H1 (cell line): ENCODE measurements at regions of chr17 and their contacts with region 1.

Region 1: GRCh38 chr17:58417300-58418092 is at the start of gene RNF43:
- DNase-seq: peak; percentile 84 to 95
- H3K4me3 ChIP-seq: peak within 1 kb of the TSS; percentile 42 to 70 (median 46)
- H3K27ac ChIP-seq: peak within 1 kb of the TSS; percentile 31; the same call in 1 of the 2 replicates
- H3K4me1 ChIP-seq: no peaks in the 10 kb centered on the region; a peak in 1 of 7 replicates
- H3K27me3 ChIP-seq: no peaks in the 10 kb centered on the region
- CTCF ChIP-seq: peak; percentile 71 to 88 (median 79)
- EP300 ChIP-seq: peak in 1 of 2 experiments; percentile 83; a peak in 1 of 3 replicates
- POLR2A ChIP-seq: peak; percentile 60 to 85
- RAD21 ChIP-seq: peak; percentile 76 to 87
- total RNA-seq, gene RNF43: 0.89 and 2.4 TPM in 2 replicates

Region 2: DNA sequence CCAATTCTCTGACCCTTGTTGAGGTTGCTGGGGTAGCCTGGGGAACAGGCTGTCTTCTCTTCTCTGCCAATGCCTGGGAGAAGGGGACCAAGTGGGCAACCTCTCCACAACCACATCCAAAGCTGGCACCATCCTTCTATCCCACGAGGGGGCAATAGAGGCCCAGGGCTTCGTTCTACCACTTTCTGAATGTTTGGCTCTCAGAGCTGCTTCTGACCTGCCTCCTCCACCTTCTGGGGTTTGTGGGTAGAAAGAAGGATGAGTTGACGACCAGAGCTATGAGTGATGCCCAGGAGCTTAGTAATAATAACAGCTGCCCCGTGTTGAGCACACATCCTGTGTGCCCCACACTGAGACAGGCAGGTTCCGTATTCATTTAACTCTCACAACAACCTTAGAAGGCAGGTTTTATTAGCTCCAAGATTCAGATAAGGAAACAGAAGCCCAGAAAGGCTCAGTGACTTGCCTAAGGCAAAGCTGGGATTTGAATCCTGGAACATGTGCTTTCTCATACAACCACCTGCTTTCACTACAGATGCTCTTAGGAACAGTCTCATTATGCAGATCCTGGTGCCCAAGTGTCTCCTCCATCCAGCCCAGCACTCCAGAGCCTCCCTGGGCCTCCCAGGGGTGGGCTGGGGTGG is 100.0 kb before region 1 on chr17:
- CTCF ChIA-PET with region 1: interaction called, 22 read pairs
- POLR2A ChIA-PET with region 1: interaction called, 3 read pairs
- DNase-seq: peak in 1 of 2 experiments; percentile 62
- H3K4me3 ChIP-seq: no peak overlapping the region
- H3K27ac ChIP-seq: no peak overlapping the region
- H3K4me1 ChIP-seq: no peaks in the 10 kb centered on the region; a peak in 1 of 7 replicates
- H3K27me3 ChIP-seq: no peaks in the 10 kb centered on the region; a peak in 2 of 7 replicates
- CTCF ChIP-seq: peak; percentile 71 to 87 (median 83)
- EP300 ChIP-seq: no peak
- POLR2A ChIP-seq: no peak
- RAD21 ChIP-seq: peak; percentile 94

Region 3: GRCh38 chr17:58337600-58338453 is 79.7 kb before region 1 on chr17:
- CTCF ChIA-PET with region 1: interaction called, 17 read pairs
- POLR2A ChIA-PET with region 1: interaction called, 3 read pairs
- DNase-seq: peak; percentile 44 to 78
- H3K4me3 ChIP-seq: peak overlapping the region in 1 of 4 experiments; percentile 36; a peak in 1 of 8 replicates
- H3K27ac ChIP-seq: peak overlapping the region; percentile 70
- H3K4me1 ChIP-seq: peaks cover 4 to 26% (median 21%) of the 10 kb centered on the region in 4 experiments
- H3K27me3 ChIP-seq: peaks cover 0 to 2% (median 0%) of the 10 kb centered on the region in 4 experiments; a peak in 3 of 7 replicates
- CTCF ChIP-seq: no peak; a peak in 1 of 4 replicates
- EP300 ChIP-seq: peak in 1 of 2 experiments; percentile 55; a peak in 1 of 3 replicates
- POLR2A ChIP-seq: peak in 1 of 2 experiments; percentile 69; a peak in 1 of 3 replicates
- RAD21 ChIP-seq: no peak

Region 4: DNA sequence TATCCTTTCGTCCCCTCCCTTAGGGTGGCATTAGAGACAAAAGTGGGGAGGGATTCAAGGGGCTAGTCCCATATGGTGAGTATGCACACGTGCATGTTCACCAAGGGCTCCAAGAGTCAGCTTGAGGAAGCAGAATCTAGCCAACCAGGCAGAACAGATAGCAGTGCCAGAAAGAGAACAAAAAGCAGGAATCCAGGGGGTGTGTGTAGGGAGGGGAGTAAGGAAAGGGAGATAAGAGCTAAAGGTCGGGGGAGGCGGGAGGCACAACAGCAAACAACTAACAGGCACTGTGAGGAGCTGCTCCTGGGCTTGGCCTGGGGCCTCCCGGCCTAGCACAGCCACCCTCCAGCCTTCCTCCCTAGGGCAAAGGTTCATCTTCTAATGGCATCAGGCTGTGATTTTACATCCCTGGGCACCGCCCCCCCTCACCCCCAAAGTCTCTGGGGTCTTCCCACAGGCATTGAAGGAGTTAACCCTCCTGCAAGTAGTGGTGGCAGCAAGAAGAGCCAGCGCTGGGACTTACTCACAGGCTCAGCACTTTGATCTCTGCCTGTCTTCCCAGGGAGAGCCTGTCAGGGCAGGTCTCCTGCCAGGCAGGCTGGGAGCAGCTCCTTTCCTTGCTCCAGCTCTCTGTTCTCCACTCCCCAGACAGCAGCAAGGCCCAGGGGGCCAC is 53.1 kb before region 1 on chr17:
- CTCF ChIA-PET with region 1: interaction called, 17 read pairs
- POLR2A ChIA-PET with region 1: no interaction called
- DNase-seq: no peak
- H3K4me3 ChIP-seq: no peak overlapping the region
- H3K27ac ChIP-seq: no peak overlapping the region
- H3K4me1 ChIP-seq: peaks cover 0 to 2% (median 0%) of the 10 kb centered on the region in 4 experiments; a peak in 1 of 7 replicates
- H3K27me3 ChIP-seq: no peaks in the 10 kb centered on the region
- CTCF ChIP-seq: no peak
- EP300 ChIP-seq: no peak
- POLR2A ChIP-seq: no peak
- RAD21 ChIP-seq: no peak

Region 5: DNA sequence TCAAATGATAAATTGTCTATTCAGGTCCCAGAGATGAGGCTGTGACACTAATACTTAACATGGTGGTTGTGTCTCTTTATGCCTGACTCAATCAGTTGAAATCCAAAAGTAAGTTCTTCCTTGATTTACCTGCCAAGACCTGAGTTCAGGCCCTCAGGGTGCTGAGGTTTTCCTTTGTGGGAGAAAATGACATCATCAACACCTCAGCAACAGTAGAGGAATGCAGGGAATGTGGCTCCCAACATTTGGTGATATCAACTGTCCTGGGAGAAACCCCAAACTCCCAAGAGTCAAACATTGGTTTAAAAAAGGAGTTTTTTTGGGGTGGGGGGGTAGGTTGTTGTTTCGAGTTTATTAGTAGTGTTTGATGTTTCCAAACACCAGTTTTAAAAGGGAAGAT is 14.8 kb before region 1 on chr17:
- CTCF ChIA-PET with region 1: interaction called, 15 read pairs
- POLR2A ChIA-PET with region 1: interaction called, 9 read pairs
- DNase-seq: no peak
- H3K4me3 ChIP-seq: peak overlapping the region in 1 of 4 experiments; percentile 28; a peak in 1 of 8 replicates
- H3K27ac ChIP-seq: no peak overlapping the region
- H3K4me1 ChIP-seq: peaks cover 2 to 12% (median 8%) of the 10 kb centered on the region in 4 experiments; a peak in 4 of 7 replicates
- H3K27me3 ChIP-seq: peaks cover 19 to 49% (median 35%) of the 10 kb centered on the region in 4 experiments; a peak in 6 of 7 replicates
- CTCF ChIP-seq: no peak
- EP300 ChIP-seq: peak in 1 of 2 experiments; percentile 57; a peak in 1 of 3 replicates
- POLR2A ChIP-seq: no peak
- RAD21 ChIP-seq: no peak

Region 6: GRCh38 chr17:58432806-58433572 is 15.5 kb after region 1 on chr17:
- CTCF ChIA-PET with region 1: interaction called, 19 read pairs
- POLR2A ChIA-PET with region 1: interaction called, 3 read pairs
- DNase-seq: no peak
- H3K4me3 ChIP-seq: no peak overlapping the region
- H3K27ac ChIP-seq: no peak overlapping the region
- H3K4me1 ChIP-seq: no peaks in the 10 kb centered on the region
- H3K27me3 ChIP-seq: peaks cover 0 to 2% (median 0%) of the 10 kb centered on the region in 4 experiments; a peak in 1 of 7 replicates
- CTCF ChIP-seq: no peak
- EP300 ChIP-seq: no peak
- POLR2A ChIP-seq: no peak
- RAD21 ChIP-seq: no peak

Region 7: DNA sequence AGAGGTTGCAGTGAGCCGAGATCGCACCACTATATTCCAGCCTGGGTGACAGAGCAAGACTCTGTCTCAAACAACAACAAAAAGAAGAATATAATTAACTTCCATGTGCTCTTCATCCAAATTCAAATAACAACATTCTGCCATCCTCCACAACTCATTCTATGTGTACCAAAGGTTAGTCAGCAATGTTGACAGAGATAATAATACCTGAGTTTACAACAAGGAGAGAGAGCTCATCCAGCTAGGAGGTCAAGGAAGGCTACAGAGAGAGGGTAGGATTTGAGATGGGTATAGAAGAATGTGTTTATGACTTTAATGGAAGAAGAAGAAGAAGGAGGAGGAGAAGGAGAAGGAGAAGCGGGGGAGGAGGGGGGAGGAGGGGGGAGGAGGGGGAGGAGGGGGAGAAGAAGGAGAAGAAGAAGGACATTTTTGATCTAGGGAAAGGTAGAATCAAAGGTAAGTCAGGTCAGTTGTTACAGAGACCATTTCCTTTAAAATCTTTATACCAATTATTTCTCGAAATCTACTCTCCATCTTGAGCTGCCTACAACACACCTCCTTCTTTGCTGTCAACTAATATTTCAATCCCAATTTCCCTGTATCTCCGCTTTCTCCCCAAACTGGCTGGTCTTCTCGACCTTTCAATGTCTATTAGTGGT is 80.8 kb after region 1 on chr17:
- CTCF ChIA-PET with region 1: no interaction called
- POLR2A ChIA-PET with region 1: no interaction called
- DNase-seq: no peak
- H3K4me3 ChIP-seq: no peak overlapping the region
- H3K27ac ChIP-seq: no peak overlapping the region
- H3K4me1 ChIP-seq: no peaks in the 10 kb centered on the region
- H3K27me3 ChIP-seq: no peaks in the 10 kb centered on the region
- CTCF ChIP-seq: no peak
- EP300 ChIP-seq: no peak
- POLR2A ChIP-seq: no peak
- RAD21 ChIP-seq: no peak

Region 8: DNA sequence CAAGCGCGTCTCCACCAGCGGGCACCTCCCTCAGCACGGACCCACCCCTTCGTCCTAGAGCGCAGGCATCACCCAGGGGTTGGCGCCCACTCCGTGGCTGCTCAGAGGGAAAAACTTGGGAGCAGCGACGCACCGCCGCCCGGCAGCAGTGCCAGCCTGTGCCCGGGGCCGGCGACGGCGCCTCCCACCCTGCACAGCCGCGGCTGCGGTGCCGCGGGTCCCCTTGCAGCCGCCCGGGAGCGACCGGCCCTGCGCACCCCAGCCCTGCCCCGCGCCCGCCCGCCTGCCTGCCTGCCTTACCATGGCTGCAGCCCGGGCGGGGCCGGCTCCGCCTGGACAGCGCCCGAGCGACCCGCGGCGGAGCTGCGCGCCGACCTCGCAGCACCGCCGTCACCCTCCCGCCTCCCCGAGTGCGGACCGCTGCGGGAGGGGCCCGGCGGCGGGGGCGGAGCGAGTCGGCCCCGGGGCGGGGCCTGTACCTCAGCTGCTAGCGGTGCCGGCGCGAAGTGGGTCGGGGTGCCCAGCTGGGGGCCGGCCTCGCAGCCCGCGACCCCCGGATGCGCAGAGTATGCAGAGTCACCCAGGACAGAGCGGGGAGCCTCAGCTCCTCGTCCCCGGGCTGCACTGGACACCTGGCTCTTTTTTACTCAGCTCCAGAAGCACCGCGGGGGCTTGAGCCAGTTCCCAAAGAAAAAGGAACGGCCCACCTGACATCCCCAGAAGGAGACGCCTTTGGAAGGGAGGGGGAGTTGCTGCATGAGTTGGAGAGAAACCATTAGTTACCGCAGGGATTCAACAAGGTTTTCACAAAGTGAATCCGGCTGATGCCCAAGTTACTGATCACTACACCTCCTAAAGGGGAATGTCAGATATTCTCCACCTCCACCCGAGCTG is 114.4 kb after region 1 on chr17:
- CTCF ChIA-PET with region 1: no interaction called
- POLR2A ChIA-PET with region 1: no interaction called
- DNase-seq: peak in 1 of 2 experiments; percentile 87
- H3K4me3 ChIP-seq: peak overlapping the region; percentile 67 to 90 (median 72)
- H3K27ac ChIP-seq: no peak overlapping the region
- H3K4me1 ChIP-seq: peaks cover 7 to 15% (median 9%) of the 10 kb centered on the region in 4 experiments
- H3K27me3 ChIP-seq: peaks cover 0 to 6% (median 4%) of the 10 kb centered on the region in 4 experiments; a peak in 5 of 7 replicates
- CTCF ChIP-seq: no peak
- EP300 ChIP-seq: no peak
- POLR2A ChIP-seq: no peak
- RAD21 ChIP-seq: no peak